A549 (cell line): ENCODE measurements at regions of chr7 and their contacts with region 1.

Region 1: GRCh38 chr7:67371429-67372305 is 375.0 kb downstream of the TYW1 start:
- DNase-seq: peak; percentile 71 to 87
- ATAC-seq: peak; percentile 95 to 99
- H3K4me3 ChIP-seq: no peak overlapping the region
- H3K27ac ChIP-seq: no peak overlapping the region
- H3K4me1 ChIP-seq: peaks cover 4% of the 10 kb centered on the region; the same call in 1 of the 3 replicates
- CTCF ChIP-seq: peak; percentile 80
- EP300 ChIP-seq: no peak
- POLR2A ChIP-seq: no peak
- RAD21 ChIP-seq: peak; percentile 87 to 91

Region 2: GRCh38 chr7:67251986-67252558 is 119.6 kb before region 1 on chr7:
- CTCF ChIA-PET with region 1: no interaction called
- POLR2A ChIA-PET with region 1: no interaction called
- DNase-seq: no peak
- ATAC-seq: no peak
- H3K4me3 ChIP-seq: no peak overlapping the region
- H3K27ac ChIP-seq: no peak overlapping the region
- H3K4me1 ChIP-seq: no peaks in the 10 kb centered on the region
- CTCF ChIP-seq: no peak
- EP300 ChIP-seq: no peak
- POLR2A ChIP-seq: no peak
- RAD21 ChIP-seq: no peak

Region 3: GRCh38 chr7:67387851-67388250 is 16.2 kb after region 1 on chr7:
- CTCF ChIA-PET with region 1: interaction called, 10 read pairs
- POLR2A ChIA-PET with region 1: no interaction called
- DNase-seq: no peak
- ATAC-seq: no peak
- H3K4me3 ChIP-seq: no peak overlapping the region
- H3K27ac ChIP-seq: no peak overlapping the region
- H3K4me1 ChIP-seq: no peaks in the 10 kb centered on the region
- CTCF ChIP-seq: no peak
- EP300 ChIP-seq: no peak
- POLR2A ChIP-seq: no peak
- RAD21 ChIP-seq: no peak